Psoas muscle (tissue), 8 donors: ENCODE measurements at regions of chr11 and their contacts with region 1.

Region 1: DNA sequence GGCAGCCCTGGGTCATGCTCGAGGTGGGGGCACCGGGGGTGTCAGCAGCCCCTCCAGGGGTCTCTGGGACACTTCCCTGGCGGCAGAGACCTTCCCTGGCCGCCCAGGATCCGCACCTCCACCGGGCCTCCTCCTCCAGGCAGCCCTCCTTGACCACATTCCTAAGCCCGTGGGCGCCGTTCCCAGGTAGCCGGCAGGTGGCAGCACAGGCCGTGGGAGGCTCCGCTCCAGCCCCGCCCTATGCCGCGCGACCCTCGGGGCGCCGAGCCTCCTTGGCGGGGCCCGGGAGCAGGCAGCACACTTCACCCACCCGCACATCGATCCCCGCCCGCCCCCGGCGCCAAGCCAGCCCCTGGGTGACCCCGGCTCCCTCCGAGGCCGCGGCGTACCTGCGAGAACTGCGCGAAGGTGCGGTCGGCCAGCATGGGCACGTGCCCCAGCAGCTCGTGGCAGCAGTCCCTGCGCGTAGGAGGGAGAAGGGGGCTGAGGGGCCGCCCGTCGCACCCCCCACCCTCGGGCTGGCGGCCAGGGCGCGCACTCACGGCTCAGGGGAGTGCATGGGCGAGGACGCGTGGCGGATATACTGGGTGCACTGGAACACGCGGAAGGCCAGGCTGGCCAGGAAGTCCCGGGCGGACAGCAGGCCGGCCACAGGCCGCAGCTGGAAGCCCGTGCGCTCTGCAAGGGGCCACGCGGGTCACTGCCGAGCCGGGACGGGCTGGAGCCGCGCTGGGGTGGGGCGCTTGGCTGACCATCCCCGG is 5.3 kb upstream of the INS start:
- DNase-seq: no peak
- ATAC-seq: peak; percentile 43 to 72 (median 48)
- H3K4me3 ChIP-seq: peak overlapping the region; percentile 49
- H3K27ac ChIP-seq: no peak overlapping the region
- H3K4me1 ChIP-seq: peaks cover 5% of the 10 kb centered on the region
- H3K27me3 ChIP-seq: peaks cover 0 to 68% (median 9%) of the 10 kb centered on the region in 3 donors
- CTCF ChIP-seq: peak; percentile 53

Region 2: GRCh38 chr11:2234963-2235362 is 68.7 kb after region 1 on chr11:
- intact Hi-C with region 1: no loop called
- DNase-seq: no peak
- ATAC-seq: no peak
- H3K4me3 ChIP-seq: no peak overlapping the region
- H3K27ac ChIP-seq: no peak overlapping the region
- H3K4me1 ChIP-seq: no peaks in the 10 kb centered on the region
- H3K27me3 ChIP-seq: no peaks in the 10 kb centered on the region
- CTCF ChIP-seq: no peak

Region 3: GRCh38 chr11:2420502-2421225 is 254.4 kb after region 1 on chr11:
- intact Hi-C with region 1: loop called in 1 of 2 experiments (anchors 10 kb)
- DNase-seq: peak; percentile 72 to 86
- ATAC-seq: peak; percentile 92 to 98 (median 96)
- H3K4me3 ChIP-seq: no peak overlapping the region
- H3K27ac ChIP-seq: no peak overlapping the region
- H3K4me1 ChIP-seq: no peaks in the 10 kb centered on the region
- H3K27me3 ChIP-seq: peaks cover 0 to 6% (median 0%) of the 10 kb centered on the region in 3 donors
- CTCF ChIP-seq: peak; percentile 94